Activated CD8-positive, alpha-beta T cell treated with anti-CD3 and anti-CD28 coated beads for 36 hours (primary cell): ENCODE measurements at regions of chr17 and their contacts with region 1.

Region 1: GRCh38 chr17:7484067-7484918 is at the start of gene POLR2A:
- DNase-seq: peak; percentile 96
- ATAC-seq: peak; percentile 67
- H3K4me3 Mint-ChIP-seq: peak within 1 kb of the TSS; percentile 96
- H3K27ac Mint-ChIP-seq: peak within 1 kb of the TSS; percentile 99
- H3K4me1 Mint-ChIP-seq: peaks cover 63% of the 10 kb centered on the region
- H3K27me3 Mint-ChIP-seq: no peaks in the 10 kb centered on the region
- CTCF ChIP-seq: no peak
- total RNA-seq, gene POLR2A: 219 to 223 TPM

Region 2: GRCh38 chr17:7444682-7445618 is 39.3 kb before region 1 on chr17 and contains the start of gene CHRNB1:
- CTCF ChIA-PET with region 1: interaction called, 3 read pairs
- POLR2A ChIA-PET with region 1: interaction called, 53 read pairs
- intact Hi-C with region 1: no loop called
- DNase-seq: peak; percentile 44
- ATAC-seq: peak; percentile 5
- H3K4me3 Mint-ChIP-seq: peak within 1 kb of the TSS; percentile 64
- H3K27ac Mint-ChIP-seq: no peak within 1 kb of the TSS
- H3K4me1 Mint-ChIP-seq: peaks cover 25% of the 10 kb centered on the region
- H3K27me3 Mint-ChIP-seq: peaks cover 57% of the 10 kb centered on the region
- CTCF ChIP-seq: no peak
- total RNA-seq, gene CHRNB1: 11.5 to 11.7 TPM

Region 3: DNA sequence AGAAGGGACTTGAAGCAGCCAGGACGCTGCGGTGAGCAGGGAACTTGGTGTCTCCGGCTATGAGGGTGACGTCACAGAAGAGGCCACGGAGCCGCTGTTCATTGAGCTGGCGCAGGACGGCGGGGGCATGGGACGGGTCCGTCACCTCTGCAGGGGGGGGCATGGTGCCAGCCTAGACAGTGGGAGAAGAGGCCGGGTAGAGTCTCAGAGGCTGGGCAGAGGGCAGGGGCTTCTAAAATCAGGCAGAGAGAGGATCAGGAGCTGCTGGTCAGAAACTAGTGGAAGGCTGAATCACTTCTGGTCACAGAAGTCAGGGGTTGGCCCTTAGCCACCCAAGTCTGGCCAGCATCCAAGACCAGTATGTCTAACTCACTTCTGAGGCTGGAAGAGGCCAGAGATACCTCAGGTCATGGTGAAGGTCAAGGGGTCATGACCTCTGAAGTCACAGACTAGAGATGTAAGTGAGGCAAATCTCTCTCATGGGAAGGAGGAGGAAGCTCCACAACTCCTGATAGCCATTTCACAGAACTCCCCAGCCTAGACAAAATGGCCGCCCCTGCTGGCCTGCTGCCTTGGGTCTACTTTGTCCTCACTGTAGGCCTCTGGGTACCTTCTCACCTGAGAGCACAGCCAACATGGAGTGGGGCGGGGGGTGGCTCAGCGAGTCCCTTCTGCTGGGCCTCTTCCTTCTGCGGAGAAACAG is 17.5 kb before region 1 on chr17:
- CTCF ChIA-PET with region 1: no interaction called
- POLR2A ChIA-PET with region 1: interaction called, 122 read pairs
- intact Hi-C with region 1: no loop called
- DNase-seq: no peak
- ATAC-seq: peak; percentile 8
- H3K4me3 Mint-ChIP-seq: no peak overlapping the region
- H3K27ac Mint-ChIP-seq: peak overlapping the region; percentile 83
- H3K4me1 Mint-ChIP-seq: peaks cover 28% of the 10 kb centered on the region
- H3K27me3 Mint-ChIP-seq: no peaks in the 10 kb centered on the region
- CTCF ChIP-seq: no peak

Region 4: GRCh38 chr17:7548585-7549400 is 64.5 kb after region 1 on chr17 and contains the start of gene TNFSF12:
- CTCF ChIA-PET with region 1: no interaction called
- POLR2A ChIA-PET with region 1: interaction called, 16 read pairs
- intact Hi-C with region 1: no loop called
- DNase-seq: peak; percentile 76
- ATAC-seq: peak; percentile 56
- H3K4me3 Mint-ChIP-seq: peak within 1 kb of the TSS; percentile 82
- H3K27ac Mint-ChIP-seq: peak within 1 kb of the TSS; percentile 77
- H3K4me1 Mint-ChIP-seq: peaks cover 54% of the 10 kb centered on the region
- H3K27me3 Mint-ChIP-seq: no peaks in the 10 kb centered on the region
- CTCF ChIP-seq: no peak
- total RNA-seq, gene TNFSF12: 11.8 to 13.8 TPM